ENCODE measurements at regions of chr10 and their contacts with region 1.

Region 1: GRCh38 chr10:5684318-5684970 is at the start of gene TASOR2:
- H3K4me3 Mint-ChIP-seq: peak within 1 kb of the TSS; percentile 94
- H3K27ac Mint-ChIP-seq: peak within 1 kb of the TSS; percentile 87
- H3K4me1 Mint-ChIP-seq: peaks cover 24% of the 10 kb centered on the region
- H3K27me3 Mint-ChIP-seq: no peaks in the 10 kb centered on the region

Region 2: GRCh38 chr10:5666008-5666829 is 18.2 kb before region 1 on chr10 and contains the start of gene ASB13:
- intact Hi-C with region 1: loop called (anchors 2 kb)
- H3K4me3 Mint-ChIP-seq: peak within 1 kb of the TSS; percentile 85
- H3K27ac Mint-ChIP-seq: peak within 1 kb of the TSS; percentile 78
- H3K4me1 Mint-ChIP-seq: peaks cover 28% of the 10 kb centered on the region
- H3K27me3 Mint-ChIP-seq: no peaks in the 10 kb centered on the region

Region 3: GRCh38 chr10:5889624-5890451 is 205.4 kb after region 1 on chr10 and contains the starts of genes ANKRD16 and FBH1:
- intact Hi-C with region 1: loop called (anchors 10 kb)
- H3K4me3 Mint-ChIP-seq: peak within 1 kb of the TSS; percentile 85
- H3K27ac Mint-ChIP-seq: peak within 1 kb of the TSS; percentile 83
- H3K4me1 Mint-ChIP-seq: peaks cover 32% of the 10 kb centered on the region
- H3K27me3 Mint-ChIP-seq: no peaks in the 10 kb centered on the region